Ascending aorta (tissue), 2 donors: ENCODE measurements at regions of chr12 and their contacts with region 1.

Region 1: GRCh38 chr12:121811434-121812319 is 7.9 kb downstream of the SETD1B start:
- DNase-seq: peak in 1 of 2 donors; percentile 68
- H3K4me3 ChIP-seq: peak overlapping the region; percentile 63 to 69
- H3K27ac ChIP-seq: peak overlapping the region; percentile 66 to 80
- H3K4me1 ChIP-seq: peaks cover 24 to 40% of the 10 kb centered on the region in 2 donors
- H3K27me3 ChIP-seq: no peaks in the 10 kb centered on the region
- CTCF ChIP-seq: peak; percentile 93 to 99 (median 99)

Region 2: GRCh38 chr12:121697098-121697698 is 114.5 kb before region 1 on chr12:
- intact Hi-C with region 1: loop called (anchors 2 kb)
- DNase-seq: no peak
- H3K4me3 ChIP-seq: no peak overlapping the region
- H3K27ac ChIP-seq: no peak overlapping the region
- H3K4me1 ChIP-seq: peaks cover 0 to 9% of the 10 kb centered on the region in 2 donors
- H3K27me3 ChIP-seq: no peaks in the 10 kb centered on the region
- CTCF ChIP-seq: peak; percentile 32 to 70 (median 55)

Region 3: GRCh38 chr12:121773011-121773777 is 38.5 kb before region 1 on chr12:
- intact Hi-C with region 1: loop called (anchors 1 kb)
- DNase-seq: peak in 1 of 2 donors; percentile 72
- H3K4me3 ChIP-seq: peak overlapping the region in 1 of 2 donors; percentile 0
- H3K27ac ChIP-seq: no peak overlapping the region
- H3K4me1 ChIP-seq: peaks cover 2 to 9% of the 10 kb centered on the region in 2 donors
- H3K27me3 ChIP-seq: no peaks in the 10 kb centered on the region
- CTCF ChIP-seq: peak; percentile 79 to 86 (median 80)